PC-9 (cell line): ENCODE measurements at regions of chr6 and their contacts with region 1.

Region 1: DNA sequence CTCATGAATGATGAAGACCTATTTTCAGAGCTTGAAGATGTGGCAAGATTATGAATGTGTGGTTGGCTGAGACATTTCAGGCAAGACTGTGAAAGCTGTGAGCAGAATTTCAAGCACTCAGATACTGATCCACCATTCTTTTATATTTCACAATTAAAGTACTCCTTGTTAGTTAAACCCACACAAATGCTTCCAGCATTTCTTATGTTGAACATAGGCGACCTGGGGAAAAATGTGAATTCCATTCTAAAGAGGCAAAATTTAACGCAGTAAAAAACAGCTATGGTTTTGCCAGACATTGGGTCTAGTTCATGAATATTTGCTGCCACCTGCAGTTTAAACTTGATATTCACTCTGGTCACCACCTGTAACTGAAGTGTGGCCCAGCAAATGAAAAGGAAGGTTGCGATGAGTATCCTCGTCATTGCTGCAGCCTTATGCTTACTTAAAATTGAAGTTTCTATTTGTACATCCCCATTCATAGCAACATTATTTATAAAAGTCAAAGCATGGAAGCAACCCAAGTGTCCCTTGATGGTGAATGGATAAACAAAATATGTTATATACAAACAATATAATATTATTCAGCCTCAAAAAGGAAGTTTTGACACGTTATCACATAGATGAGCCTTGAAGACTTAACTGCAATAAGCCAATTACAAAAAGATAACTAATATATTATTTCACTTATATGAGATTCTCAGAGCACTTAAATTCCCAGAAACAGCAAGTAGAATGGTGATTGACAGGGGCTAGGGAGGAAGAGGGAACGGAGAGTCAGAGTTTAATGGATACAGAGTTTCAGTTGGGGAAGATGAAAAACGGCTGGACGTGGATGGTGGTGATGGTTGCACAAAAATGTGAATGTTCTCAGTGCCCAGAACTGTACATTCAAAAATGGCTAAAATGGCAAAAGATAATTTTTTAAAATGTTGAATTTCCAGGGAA is 32.4 kb upstream of the FAM184A start:
- DNase-seq: peak; percentile 35 to 59
- H3K4me3 ChIP-seq: no peak overlapping the region
- H3K27ac ChIP-seq: no peak overlapping the region
- H3K4me1 ChIP-seq: no peaks in the 10 kb centered on the region
- H3K27me3 ChIP-seq: no peaks in the 10 kb centered on the region
- CTCF ChIP-seq: peak; percentile 89

Region 2: DNA sequence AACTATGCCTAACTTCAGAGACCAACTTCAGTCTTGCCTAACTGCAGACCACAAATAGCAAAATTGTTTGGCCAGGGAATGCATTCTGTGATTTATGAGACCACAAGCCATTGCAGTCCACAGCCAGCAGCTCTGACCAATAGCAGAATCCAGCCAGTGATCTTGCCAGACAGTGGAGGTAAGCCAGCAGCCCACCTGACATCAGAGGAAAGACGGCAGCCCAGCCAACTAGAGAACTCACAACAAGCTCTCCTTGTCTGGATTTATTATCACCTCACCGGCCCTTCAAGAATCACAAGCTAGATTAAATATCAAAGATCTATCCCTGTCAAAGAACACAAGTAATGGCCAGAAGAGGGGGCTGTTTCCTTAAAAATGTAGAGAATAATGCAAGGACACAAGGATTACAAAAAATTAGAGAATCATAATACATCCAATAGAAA is 1270.3 kb before region 1 on chr6:
- CTCF ChIA-PET with region 1: interaction called, 3 read pairs
- POLR2A ChIA-PET with region 1: no interaction called
- intact Hi-C with region 1: loop called (anchors 5 kb)
- DNase-seq: peak; percentile 1 to 41
- H3K4me3 ChIP-seq: no peak overlapping the region
- H3K27ac ChIP-seq: no peak overlapping the region
- H3K4me1 ChIP-seq: no peaks in the 10 kb centered on the region
- H3K27me3 ChIP-seq: no peaks in the 10 kb centered on the region
- CTCF ChIP-seq: peak; percentile 86

Region 3: DNA sequence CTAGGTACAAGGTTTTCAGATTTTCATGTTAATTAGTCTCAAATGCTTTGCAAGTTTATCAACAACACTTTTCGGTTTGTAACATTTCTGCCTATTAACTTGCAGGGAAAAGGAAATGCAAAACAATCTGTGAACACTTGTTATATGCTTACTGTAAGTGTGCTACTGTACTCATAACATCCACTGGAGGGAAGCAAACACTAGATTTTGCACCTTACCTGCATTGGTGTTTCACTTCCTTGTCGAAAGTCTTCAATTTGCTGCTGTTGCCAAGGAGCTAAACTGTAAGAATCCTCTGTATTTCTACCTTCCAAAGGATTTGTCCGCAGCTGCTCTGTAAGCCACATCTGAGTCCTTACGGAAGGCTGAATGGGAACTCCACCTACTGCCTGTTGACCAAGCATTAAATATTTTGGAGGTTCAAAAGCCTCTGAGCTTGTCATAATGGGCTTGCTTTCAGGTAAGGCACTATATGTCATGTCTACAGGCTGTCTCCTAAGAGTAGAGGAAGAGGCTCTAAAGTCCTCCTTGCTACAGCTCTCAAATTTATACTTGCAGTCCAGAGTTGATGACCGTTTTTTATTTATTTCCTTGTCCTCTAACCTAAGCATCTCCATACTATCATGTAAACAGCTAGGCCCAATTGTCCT is 545.4 kb before region 1 on chr6:
- CTCF ChIA-PET with region 1: interaction called, 7 read pairs
- POLR2A ChIA-PET with region 1: no interaction called
- intact Hi-C with region 1: loop called (anchors 5 kb)
- DNase-seq: peak; percentile 3 to 72
- H3K4me3 ChIP-seq: no peak overlapping the region
- H3K27ac ChIP-seq: no peak overlapping the region
- H3K4me1 ChIP-seq: no peaks in the 10 kb centered on the region
- H3K27me3 ChIP-seq: no peaks in the 10 kb centered on the region
- CTCF ChIP-seq: peak; percentile 82

Region 4: DNA sequence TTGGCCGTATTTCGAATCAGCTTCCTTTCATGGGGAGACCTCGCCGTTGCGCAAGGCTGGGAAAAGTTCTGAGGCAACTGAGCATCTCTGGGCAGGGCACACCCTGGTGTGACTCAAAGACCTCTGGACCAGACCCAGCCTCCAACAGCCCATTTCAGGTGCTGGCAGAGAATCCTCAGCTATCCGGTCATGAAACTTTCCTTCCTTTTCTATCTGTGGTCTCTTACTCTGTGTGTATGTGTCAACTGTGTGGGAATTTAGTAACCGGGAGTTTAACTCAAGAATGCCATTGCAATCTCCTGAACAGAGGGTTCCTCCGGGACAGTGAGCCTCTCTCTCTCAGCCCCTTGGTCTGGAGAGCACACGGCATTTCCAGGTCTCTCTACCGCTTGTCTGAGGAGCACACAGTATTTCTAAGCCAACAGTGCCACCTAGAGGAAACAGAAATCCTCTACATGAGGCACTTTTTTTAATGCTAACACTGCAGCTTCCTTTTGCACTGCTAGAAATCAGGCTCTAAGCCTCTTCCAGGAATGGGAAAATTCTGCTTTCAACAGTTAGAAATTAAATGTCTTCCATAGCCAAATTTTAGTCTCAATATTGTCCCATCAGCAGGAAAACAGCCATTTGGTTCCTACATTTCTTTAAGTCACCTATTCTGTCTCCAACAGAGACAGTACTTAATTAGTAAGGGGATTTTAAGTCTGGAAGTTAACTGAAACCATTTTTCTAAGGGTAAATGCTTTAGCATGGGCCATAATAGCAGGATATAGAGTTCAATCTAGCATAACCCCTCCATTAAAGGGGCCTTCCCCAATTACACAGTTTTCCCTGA is 530.1 kb before region 1 on chr6:
- CTCF ChIA-PET with region 1: no interaction called
- POLR2A ChIA-PET with region 1: no interaction called
- intact Hi-C with region 1: no loop called
- DNase-seq: no peak
- H3K4me3 ChIP-seq: no peak overlapping the region
- H3K27ac ChIP-seq: no peak overlapping the region
- H3K4me1 ChIP-seq: no peaks in the 10 kb centered on the region
- H3K27me3 ChIP-seq: no peaks in the 10 kb centered on the region
- CTCF ChIP-seq: peak; percentile 79

Region 5: DNA sequence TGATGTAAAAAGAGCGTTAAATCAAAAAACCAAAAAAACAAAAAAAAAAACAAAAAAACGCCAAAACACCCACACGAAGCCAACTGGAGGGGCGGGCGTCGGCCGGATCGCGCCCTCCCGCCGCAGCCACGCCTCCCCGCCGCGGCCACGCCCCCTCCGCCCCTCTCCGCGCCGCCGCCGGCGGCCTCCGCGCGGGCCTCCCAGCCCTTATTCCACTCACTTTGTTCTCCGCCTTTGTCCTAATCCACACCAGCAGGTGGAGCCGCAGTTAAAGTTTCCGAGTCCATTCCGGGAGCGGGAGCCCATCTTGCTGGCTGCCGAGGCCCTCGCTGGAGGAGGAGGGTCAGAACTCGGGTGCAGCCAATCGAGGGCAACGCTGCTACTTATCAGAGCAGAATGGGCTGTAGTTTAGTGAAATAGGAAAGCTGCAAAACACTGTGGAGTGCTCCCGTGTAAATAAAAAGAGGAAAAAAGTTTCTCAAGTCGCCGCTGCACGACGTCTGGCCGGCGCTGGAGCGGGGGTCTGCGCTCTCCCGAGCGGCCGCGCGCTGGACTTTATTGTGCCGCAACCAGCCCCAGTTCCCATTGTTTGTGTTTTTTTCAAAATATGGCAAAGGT is 217.0 kb before region 1 on chr6 and contains the start of gene ASF1A:
- CTCF ChIA-PET with region 1: interaction called, 5 read pairs
- POLR2A ChIA-PET with region 1: no interaction called
- intact Hi-C with region 1: loop called (anchors 5 kb)
- DNase-seq: peak; percentile 95 to 96
- H3K4me3 ChIP-seq: peak within 1 kb of the TSS; percentile 92
- H3K27ac ChIP-seq: peak within 1 kb of the TSS; percentile 95
- H3K4me1 ChIP-seq: peaks cover 37% of the 10 kb centered on the region
- H3K27me3 ChIP-seq: no peaks in the 10 kb centered on the region
- CTCF ChIP-seq: peak; percentile 69
- total RNA-seq, gene ASF1A: 25.7 and 39.5 TPM in 2 replicates

Region 6: GRCh38 chr6:118968416-118968815 is 142.5 kb before region 1 on chr6:
- CTCF ChIA-PET with region 1: interaction called, 7 read pairs
- POLR2A ChIA-PET with region 1: no interaction called
- intact Hi-C with region 1: loop called (anchors 1 kb)
- DNase-seq: no peak
- H3K4me3 ChIP-seq: no peak overlapping the region
- H3K27ac ChIP-seq: no peak overlapping the region
- H3K4me1 ChIP-seq: no peaks in the 10 kb centered on the region
- H3K27me3 ChIP-seq: no peaks in the 10 kb centered on the region
- CTCF ChIP-seq: peak; percentile 64